B cell (primary cell): ENCODE measurements at regions of chr10 and their contacts with region 1.

Region 1: DNA sequence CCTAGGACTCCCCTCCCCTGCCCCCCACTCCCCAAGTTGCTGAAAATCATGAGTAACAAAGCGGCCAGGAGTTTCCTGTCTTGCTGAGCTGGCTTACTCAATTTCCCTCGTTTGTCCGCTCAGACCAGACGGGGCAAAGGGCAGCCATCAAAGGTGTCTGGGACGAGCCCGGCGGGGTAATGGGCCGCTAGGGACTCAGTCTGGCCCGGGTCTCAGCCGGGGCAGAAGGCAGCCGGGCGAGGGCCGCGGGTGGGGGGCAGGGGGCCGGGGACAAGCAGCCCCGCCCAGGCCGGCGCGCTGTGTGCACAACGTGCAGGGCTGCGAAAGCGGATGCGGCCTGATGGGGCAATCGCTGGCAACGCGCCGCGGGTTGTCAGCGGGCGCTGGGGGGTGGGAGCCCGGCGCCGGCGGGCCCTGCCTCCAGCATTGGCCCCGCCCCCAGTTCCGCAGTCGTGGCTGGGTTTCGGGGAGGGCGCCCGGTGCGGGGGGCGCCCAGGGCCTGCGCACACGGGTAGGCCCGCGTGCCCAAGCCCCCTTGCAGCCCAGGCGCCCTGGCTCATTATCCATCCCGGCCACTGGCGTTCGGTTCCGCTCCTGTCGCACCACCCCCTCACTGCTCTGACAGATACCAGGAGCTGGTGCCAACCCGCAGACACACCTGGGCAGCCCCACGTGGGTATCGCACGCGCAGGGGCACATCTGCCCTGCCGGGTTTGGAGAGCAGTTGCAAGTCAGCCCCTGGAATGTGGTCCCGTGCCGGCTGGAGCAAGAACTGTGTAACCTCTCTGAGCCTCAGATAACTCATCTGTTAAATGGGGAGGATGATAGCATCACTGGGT is 35.1 kb downstream of the DNAJB12 start:
- DNase-seq: peak; percentile 92
- ATAC-seq: peak; percentile 65
- H3K4me3 ChIP-seq: peak overlapping the region in 4 of 5 experiments; percentile 49 to 68 (median 58)
- H3K4me3 Mint-ChIP-seq: peak overlapping the region; percentile 88
- H3K27ac ChIP-seq: peak overlapping the region; percentile 94 to 95
- H3K27ac Mint-ChIP-seq: peak overlapping the region; percentile 99
- H3K4me1 ChIP-seq: peaks cover 78 to 91% of the 10 kb centered on the region in 2 donors
- H3K4me1 Mint-ChIP-seq: peaks cover 78% of the 10 kb centered on the region
- H3K27me3 ChIP-seq: no peaks in the 10 kb centered on the region
- H3K27me3 Mint-ChIP-seq: no peaks in the 10 kb centered on the region
- CTCF ChIP-seq: no peak

Region 2: GRCh38 chr10:72088889-72089575 is 230.6 kb before region 1 on chr10:
- CTCF ChIA-PET with region 1: no interaction called
- POLR2A ChIA-PET with region 1: interaction called, 12 read pairs
- intact Hi-C with region 1: no loop called
- DNase-seq: no peak
- ATAC-seq: no peak
- H3K4me3 ChIP-seq: peak overlapping the region in 4 of 5 experiments; percentile 79 to 93 (median 88)
- H3K4me3 Mint-ChIP-seq: peak overlapping the region; percentile 100
- H3K27ac ChIP-seq: peak overlapping the region; percentile 89 to 92
- H3K27ac Mint-ChIP-seq: peak overlapping the region; percentile 100
- H3K4me1 ChIP-seq: peaks cover 24 to 33% of the 10 kb centered on the region in 2 donors
- H3K4me1 Mint-ChIP-seq: peaks cover 47% of the 10 kb centered on the region
- H3K27me3 ChIP-seq: no peaks in the 10 kb centered on the region
- H3K27me3 Mint-ChIP-seq: no peaks in the 10 kb centered on the region
- CTCF ChIP-seq: no peak

Region 3: GRCh38 chr10:72223743-72224101 is 95.9 kb before region 1 on chr10:
- CTCF ChIA-PET with region 1: interaction called, 13 read pairs
- POLR2A ChIA-PET with region 1: interaction called, 5 read pairs
- intact Hi-C with region 1: loop called (anchors 1 kb)
- DNase-seq: peak; percentile 34
- ATAC-seq: peak; percentile 24
- H3K4me3 ChIP-seq: no peak overlapping the region
- H3K4me3 Mint-ChIP-seq: peak overlapping the region; percentile 44
- H3K27ac ChIP-seq: peak overlapping the region; percentile 42 to 68
- H3K27ac Mint-ChIP-seq: peak overlapping the region; percentile 75
- H3K4me1 ChIP-seq: peaks cover 58 to 70% of the 10 kb centered on the region in 2 donors
- H3K4me1 Mint-ChIP-seq: peaks cover 55% of the 10 kb centered on the region
- H3K27me3 ChIP-seq: no peaks in the 10 kb centered on the region
- H3K27me3 Mint-ChIP-seq: no peaks in the 10 kb centered on the region
- CTCF ChIP-seq: no peak

Region 4: GRCh38 chr10:72248468-72249151 is 71.0 kb before region 1 on chr10:
- CTCF ChIA-PET with region 1: interaction called, 3 read pairs
- POLR2A ChIA-PET with region 1: interaction called, 9 read pairs
- intact Hi-C with region 1: loop called (anchors 1 kb)
- DNase-seq: peak; percentile 85
- ATAC-seq: peak; percentile 76
- H3K4me3 ChIP-seq: peak overlapping the region in 4 of 5 experiments; percentile 26 to 49 (median 44)
- H3K4me3 Mint-ChIP-seq: peak overlapping the region; percentile 91
- H3K27ac ChIP-seq: peak overlapping the region; percentile 76 to 81
- H3K27ac Mint-ChIP-seq: peak overlapping the region; percentile 98
- H3K4me1 ChIP-seq: peaks cover 78 to 83% of the 10 kb centered on the region in 2 donors
- H3K4me1 Mint-ChIP-seq: peaks cover 80% of the 10 kb centered on the region
- H3K27me3 ChIP-seq: no peaks in the 10 kb centered on the region
- H3K27me3 Mint-ChIP-seq: no peaks in the 10 kb centered on the region
- CTCF ChIP-seq: no peak

Region 5: DNA sequence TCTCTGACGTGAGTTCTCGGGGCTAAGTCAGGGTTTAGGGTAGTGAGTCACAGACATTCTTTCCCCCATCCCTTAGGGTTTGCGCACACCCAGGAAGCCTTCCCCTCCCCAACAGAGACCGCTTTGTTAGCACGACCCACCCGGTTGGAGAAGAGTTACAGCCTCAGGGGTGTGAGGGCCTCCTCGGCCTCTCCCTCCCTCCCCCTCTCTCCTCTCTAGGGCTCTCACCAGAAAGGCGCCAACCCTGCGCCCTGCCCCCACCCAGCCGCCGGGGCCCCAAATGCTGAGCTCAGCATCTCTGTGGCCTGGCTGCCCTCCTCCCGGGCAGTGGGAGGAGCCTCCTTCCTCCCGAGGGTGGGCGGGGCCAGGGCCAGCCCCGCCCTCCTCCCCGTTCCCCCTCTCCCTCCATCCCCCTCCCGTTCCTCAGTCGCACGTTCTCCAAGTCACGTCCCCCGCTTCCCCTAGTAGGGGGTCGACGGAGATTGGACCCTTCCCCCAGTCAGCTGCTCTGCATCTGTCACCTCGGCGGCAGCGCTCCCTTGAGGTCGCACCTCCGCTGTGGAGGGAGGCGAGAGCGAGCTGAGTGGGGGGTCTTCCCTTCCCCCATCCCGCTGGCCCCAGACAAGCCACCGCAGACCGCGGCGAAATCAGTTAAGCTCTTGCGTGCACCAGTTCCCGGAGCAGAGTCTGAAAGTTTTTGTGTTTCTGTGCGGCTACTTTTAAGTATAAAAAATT is 58.9 kb before region 1 on chr10:
- CTCF ChIA-PET with region 1: interaction called, 5 read pairs
- POLR2A ChIA-PET with region 1: interaction called, 13 read pairs
- intact Hi-C with region 1: no loop called
- DNase-seq: peak; percentile 81
- ATAC-seq: peak; percentile 81
- H3K4me3 ChIP-seq: peak overlapping the region; percentile 51 to 80 (median 73)
- H3K4me3 Mint-ChIP-seq: peak overlapping the region; percentile 94
- H3K27ac ChIP-seq: peak overlapping the region; percentile 47 to 67
- H3K27ac Mint-ChIP-seq: peak overlapping the region; percentile 89
- H3K4me1 ChIP-seq: peaks cover 48 to 68% of the 10 kb centered on the region in 2 donors
- H3K4me1 Mint-ChIP-seq: peaks cover 51% of the 10 kb centered on the region
- H3K27me3 ChIP-seq: no peaks in the 10 kb centered on the region
- H3K27me3 Mint-ChIP-seq: no peaks in the 10 kb centered on the region
- CTCF ChIP-seq: no peak

Region 6: GRCh38 chr10:72303424-72304128 is 16.1 kb before region 1 on chr10:
- CTCF ChIA-PET with region 1: interaction called, 6 read pairs
- POLR2A ChIA-PET with region 1: interaction called, 140 read pairs
- intact Hi-C with region 1: no loop called
- DNase-seq: no peak
- ATAC-seq: no peak
- H3K4me3 ChIP-seq: no peak overlapping the region
- H3K4me3 Mint-ChIP-seq: no peak overlapping the region
- H3K27ac ChIP-seq: no peak overlapping the region
- H3K27ac Mint-ChIP-seq: peak overlapping the region; percentile 70
- H3K4me1 ChIP-seq: peaks cover 12 to 26% of the 10 kb centered on the region in 2 donors
- H3K4me1 Mint-ChIP-seq: peaks cover 45% of the 10 kb centered on the region
- H3K27me3 ChIP-seq: no peaks in the 10 kb centered on the region
- H3K27me3 Mint-ChIP-seq: no peaks in the 10 kb centered on the region
- CTCF ChIP-seq: no peak

Region 7: DNA sequence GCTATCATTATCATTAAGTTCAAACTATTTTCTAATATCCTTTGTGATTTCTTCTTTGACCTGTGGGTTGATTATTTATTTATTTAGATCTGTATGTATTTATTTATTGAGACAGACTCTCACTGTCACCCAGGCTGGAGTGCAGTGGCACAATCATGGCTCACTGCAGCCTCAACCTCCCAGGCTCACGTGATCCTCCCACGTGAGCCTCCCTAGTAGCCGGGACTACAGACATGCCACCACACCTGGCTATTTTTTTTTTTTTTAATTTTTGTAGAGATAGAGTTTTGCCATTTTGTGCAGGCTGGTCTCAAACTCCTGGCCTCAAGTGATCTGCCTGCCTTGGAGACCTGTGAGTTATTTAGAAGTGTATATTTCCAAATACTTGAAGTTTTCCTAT is 961.5 kb after region 1 on chr10:
- CTCF ChIA-PET with region 1: no interaction called
- POLR2A ChIA-PET with region 1: no interaction called
- intact Hi-C with region 1: no loop called
- DNase-seq: no peak
- ATAC-seq: no peak
- H3K4me3 ChIP-seq: no peak overlapping the region
- H3K4me3 Mint-ChIP-seq: no peak overlapping the region
- H3K27ac ChIP-seq: no peak overlapping the region
- H3K27ac Mint-ChIP-seq: no peak overlapping the region
- H3K4me1 ChIP-seq: no peaks in the 10 kb centered on the region
- H3K4me1 Mint-ChIP-seq: peaks cover 3% of the 10 kb centered on the region
- H3K27me3 ChIP-seq: no peaks in the 10 kb centered on the region
- H3K27me3 Mint-ChIP-seq: no peaks in the 10 kb centered on the region
- CTCF ChIP-seq: no peak

Region 8: DNA sequence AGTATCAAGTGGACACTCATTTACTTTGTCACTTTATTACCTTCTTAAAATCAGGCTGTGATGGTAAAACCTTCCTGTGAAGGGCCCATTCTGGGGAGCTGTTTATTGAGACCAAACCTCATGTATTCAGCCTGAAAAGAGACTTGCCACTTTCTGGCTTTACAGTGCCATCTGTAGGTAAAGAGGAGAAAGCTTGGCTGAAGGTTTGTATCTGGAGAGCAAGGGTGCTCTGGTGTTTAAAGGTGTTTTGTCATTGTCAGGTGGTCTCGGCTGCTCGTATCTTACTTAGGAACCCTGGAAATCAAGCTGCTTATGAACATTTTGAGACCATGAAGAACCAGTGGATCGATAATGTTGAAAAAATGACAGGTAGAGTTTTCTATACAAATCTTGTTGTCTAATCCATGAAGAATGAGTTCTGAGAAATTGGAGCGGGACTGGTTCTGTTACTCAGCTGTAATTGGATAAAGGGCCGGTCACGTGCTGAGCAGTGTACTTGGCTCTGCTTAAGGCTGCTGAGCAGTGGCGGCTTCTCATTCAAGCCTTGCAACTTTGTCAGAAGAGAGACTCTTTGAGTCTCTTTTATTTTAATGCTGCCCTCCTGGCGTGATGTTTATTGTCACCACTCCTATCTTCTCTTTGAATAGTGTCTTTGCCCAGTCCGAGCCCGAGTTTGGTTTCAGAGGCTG is 1784.1 kb after region 1 on chr10:
- CTCF ChIA-PET with region 1: no interaction called
- POLR2A ChIA-PET with region 1: no interaction called
- intact Hi-C with region 1: no loop called
- DNase-seq: peak; percentile 26
- ATAC-seq: no peak
- H3K4me3 ChIP-seq: no peak overlapping the region
- H3K4me3 Mint-ChIP-seq: no peak overlapping the region
- H3K27ac ChIP-seq: no peak overlapping the region
- H3K27ac Mint-ChIP-seq: no peak overlapping the region
- H3K4me1 ChIP-seq: no peaks in the 10 kb centered on the region
- H3K4me1 Mint-ChIP-seq: peaks cover 2% of the 10 kb centered on the region
- H3K27me3 ChIP-seq: no peaks in the 10 kb centered on the region
- H3K27me3 Mint-ChIP-seq: no peaks in the 10 kb centered on the region
- CTCF ChIP-seq: peak; percentile 9